ENCODE measurements at regions of chr3 and their contacts with region 1.

Region 1: DNA sequence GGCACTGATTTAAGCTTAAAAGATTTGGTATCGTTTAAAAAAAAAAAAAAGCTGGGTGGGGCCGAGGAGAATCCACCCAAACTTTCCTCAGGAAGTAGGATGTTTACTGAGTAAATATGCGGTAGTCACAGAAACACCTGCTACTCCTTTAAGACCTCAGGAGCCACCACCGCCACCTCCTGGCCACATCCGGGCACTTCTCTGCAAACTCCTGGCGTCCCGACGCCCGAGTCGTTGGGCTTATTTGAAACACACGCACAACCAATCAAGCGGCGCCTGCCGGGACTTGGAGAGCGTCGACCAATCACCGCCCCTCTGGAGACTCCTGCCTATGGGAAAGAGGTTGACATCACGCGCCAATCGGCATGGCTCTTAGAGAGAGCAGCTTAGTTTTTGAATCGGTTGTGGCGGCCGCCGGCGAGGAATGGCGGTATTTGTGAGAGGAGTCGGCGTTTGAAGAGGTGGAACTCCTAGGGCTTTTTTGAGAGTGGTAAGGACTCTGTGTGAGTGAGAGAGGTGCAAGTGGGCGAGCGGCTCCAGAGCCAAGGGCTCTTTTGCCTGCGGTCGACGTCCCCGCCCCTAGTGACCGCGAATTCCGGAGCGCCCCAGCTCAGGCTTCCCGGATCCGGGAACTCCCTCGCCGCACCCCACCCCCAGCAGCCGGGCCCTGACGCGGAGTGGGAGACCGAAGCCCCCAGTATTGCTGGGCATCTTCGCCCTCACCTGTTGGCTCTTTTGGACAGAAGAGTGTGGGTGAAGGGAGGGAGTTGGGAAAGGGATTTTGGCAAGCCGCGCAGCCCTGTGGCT is at the start of gene ECT2:
- DNase-seq: peak; percentile 99
- H3K4me3 Mint-ChIP-seq: peak within 1 kb of the TSS; percentile 87
- H3K27ac Mint-ChIP-seq: peak within 1 kb of the TSS; percentile 87
- H3K4me1 Mint-ChIP-seq: peaks cover 22% of the 10 kb centered on the region
- H3K27me3 Mint-ChIP-seq: peaks cover 1% of the 10 kb centered on the region
- total RNA-seq, gene ECT2: 48.2 to 52.8 TPM

Region 2: DNA sequence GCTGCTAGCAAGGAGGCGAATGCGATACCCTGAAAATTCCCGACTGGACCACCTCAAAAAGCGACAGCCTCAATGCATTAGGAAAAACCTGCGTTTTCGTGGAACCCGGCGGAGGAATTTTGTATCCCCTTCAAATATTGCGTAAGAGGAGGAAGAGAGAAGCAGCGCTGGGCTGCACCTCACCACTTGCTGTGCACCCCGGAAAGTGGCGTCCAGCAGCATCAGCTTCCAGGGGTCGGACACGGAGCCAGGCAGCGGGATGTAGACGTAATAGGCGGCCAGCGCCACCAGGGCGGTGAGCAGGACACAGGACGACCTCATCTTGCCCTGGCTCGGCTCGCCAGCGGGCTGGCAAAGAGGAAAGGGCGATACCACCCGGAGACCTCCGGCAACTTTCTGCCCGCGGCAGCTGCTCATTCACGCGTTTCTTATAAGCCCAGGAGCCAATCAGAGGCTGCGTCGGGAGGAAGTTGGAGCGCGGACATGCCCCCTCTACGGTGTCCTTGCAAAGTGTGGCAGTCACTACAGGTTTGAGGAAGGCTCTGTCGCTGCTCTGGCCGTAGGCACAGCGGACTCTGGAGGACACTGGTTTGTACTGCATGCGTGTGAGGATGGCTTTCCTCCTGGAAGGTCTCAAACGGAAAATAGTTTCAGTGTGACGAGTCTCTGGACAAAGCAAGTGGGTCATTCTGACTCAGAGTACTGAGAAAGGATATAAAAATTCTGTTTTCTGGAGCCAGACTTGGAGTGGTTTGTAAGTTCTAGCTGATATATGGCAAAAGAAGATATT is 39.7 kb before region 1 on chr3 and contains the start of gene NCEH1:
- CTCF ChIA-PET with region 1: interaction called, 7 read pairs
- POLR2A ChIA-PET with region 1: no interaction called
- intact Hi-C with region 1: loop called (anchors 1 kb)
- DNase-seq: peak; percentile 87
- H3K4me3 Mint-ChIP-seq: peak within 1 kb of the TSS; percentile 91
- H3K27ac Mint-ChIP-seq: peak within 1 kb of the TSS; percentile 16
- H3K4me1 Mint-ChIP-seq: peaks cover 19% of the 10 kb centered on the region
- H3K27me3 Mint-ChIP-seq: no peaks in the 10 kb centered on the region
- total RNA-seq, gene NCEH1: 4.6 to 5.2 TPM

Region 3: DNA sequence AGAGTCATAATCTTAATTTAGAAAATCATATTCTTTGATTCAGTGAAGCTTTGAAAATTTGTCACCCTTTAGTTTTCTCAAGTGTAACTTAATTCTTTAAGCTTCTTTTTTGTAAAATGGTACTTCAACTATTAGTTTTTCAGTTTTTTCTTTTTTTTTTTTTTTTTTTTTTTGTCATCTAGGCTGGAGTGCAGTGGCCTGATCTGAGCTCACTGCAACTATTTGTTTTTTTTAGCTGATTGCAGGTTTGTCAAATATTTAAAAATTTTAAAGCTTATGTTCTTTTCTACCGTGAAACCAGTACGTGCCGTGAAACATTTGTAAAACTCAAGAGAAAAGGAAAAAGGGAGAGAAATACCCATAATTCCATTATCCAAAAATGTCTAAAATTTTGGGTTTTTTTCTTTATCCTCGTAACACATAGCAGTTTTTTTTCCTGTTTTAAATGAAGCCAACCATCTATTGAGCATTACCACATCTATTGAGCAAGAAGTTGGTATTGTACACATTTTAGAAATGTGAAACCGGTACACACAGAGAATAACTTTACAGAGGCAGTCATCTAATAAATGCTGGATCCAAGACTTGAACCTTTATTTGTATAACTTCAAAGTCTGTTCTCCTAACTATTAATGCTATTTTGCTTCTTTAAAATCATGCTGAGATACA is 25.6 kb after region 1 on chr3:
- CTCF ChIA-PET with region 1: interaction called, 6 read pairs
- POLR2A ChIA-PET with region 1: interaction called, 3 read pairs
- intact Hi-C with region 1: loop called (anchors 2 kb)
- DNase-seq: no peak
- H3K4me3 Mint-ChIP-seq: no peak overlapping the region
- H3K27ac Mint-ChIP-seq: no peak overlapping the region
- H3K4me1 Mint-ChIP-seq: peaks cover 11% of the 10 kb centered on the region
- H3K27me3 Mint-ChIP-seq: no peaks in the 10 kb centered on the region

Region 4: GRCh38 chr3:172803489-172803888 is 52.9 kb after region 1 on chr3:
- CTCF ChIA-PET with region 1: no interaction called
- POLR2A ChIA-PET with region 1: no interaction called
- intact Hi-C with region 1: loop called (anchors 2 kb)
- DNase-seq: no peak
- H3K4me3 Mint-ChIP-seq: no peak overlapping the region
- H3K27ac Mint-ChIP-seq: no peak overlapping the region
- H3K4me1 Mint-ChIP-seq: peaks cover 15% of the 10 kb centered on the region
- H3K27me3 Mint-ChIP-seq: no peaks in the 10 kb centered on the region

Measured in activated CD4-positive, alpha-beta memory T cell treated with anti-CD3 and anti-CD28 coated beads for 36 hours (primary cell).